ENCODE measurements at regions of chr3 and their contacts with region 1.

Region 1: GRCh38 chr3:111989061-111989678 is 9.6 kb upstream of the TAGLN3 start:
- DNase-seq: peak; percentile 56 to 71 (median 70)
- H3K4me3 ChIP-seq: no peak overlapping the region
- H3K27ac ChIP-seq: no peak overlapping the region
- H3K4me1 ChIP-seq: no peaks in the 10 kb centered on the region
- H3K27me3 ChIP-seq: no peaks in the 10 kb centered on the region

Region 2: DNA sequence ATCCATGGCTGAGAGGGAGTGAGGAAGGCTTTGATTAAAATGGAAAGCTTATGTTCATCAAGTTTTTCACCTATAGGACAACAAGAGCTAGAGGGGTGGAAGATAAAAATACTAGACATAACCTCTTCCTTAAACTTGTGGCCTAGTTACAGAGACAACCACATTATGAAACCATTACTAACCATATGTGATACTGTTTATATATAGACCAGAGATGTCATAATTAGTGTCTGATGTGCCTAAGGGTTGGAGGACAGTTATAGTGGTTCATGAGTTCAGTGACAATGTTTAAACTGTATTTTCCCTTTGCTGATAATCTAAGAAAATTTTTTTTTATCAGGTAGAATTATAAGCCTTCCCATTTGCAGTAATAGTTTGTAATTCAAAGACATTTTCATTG is 106.4 kb before region 1 on chr3:
- CTCF ChIA-PET with region 1: no interaction called
- POLR2A ChIA-PET with region 1: no interaction called
- DNase-seq: no peak
- H3K4me3 ChIP-seq: no peak overlapping the region
- H3K27ac ChIP-seq: no peak overlapping the region
- H3K4me1 ChIP-seq: no peaks in the 10 kb centered on the region
- H3K27me3 ChIP-seq: no peaks in the 10 kb centered on the region

Region 3: GRCh38 chr3:111978493-111979433 is 10.4 kb before region 1 on chr3 and contains the start of gene ABHD10:
- CTCF ChIA-PET with region 1: interaction called, 28 read pairs
- POLR2A ChIA-PET with region 1: no interaction called
- DNase-seq: peak; percentile 98 to 100 (median 98)
- H3K4me3 ChIP-seq: peak within 1 kb of the TSS; percentile 48 to 98 (median 93)
- H3K27ac ChIP-seq: peak within 1 kb of the TSS; percentile 52 to 85
- H3K4me1 ChIP-seq: peaks cover 5 to 35% (median 13%) of the 10 kb centered on the region in 4 experiments
- H3K27me3 ChIP-seq: no peaks in the 10 kb centered on the region

Region 4: DNA sequence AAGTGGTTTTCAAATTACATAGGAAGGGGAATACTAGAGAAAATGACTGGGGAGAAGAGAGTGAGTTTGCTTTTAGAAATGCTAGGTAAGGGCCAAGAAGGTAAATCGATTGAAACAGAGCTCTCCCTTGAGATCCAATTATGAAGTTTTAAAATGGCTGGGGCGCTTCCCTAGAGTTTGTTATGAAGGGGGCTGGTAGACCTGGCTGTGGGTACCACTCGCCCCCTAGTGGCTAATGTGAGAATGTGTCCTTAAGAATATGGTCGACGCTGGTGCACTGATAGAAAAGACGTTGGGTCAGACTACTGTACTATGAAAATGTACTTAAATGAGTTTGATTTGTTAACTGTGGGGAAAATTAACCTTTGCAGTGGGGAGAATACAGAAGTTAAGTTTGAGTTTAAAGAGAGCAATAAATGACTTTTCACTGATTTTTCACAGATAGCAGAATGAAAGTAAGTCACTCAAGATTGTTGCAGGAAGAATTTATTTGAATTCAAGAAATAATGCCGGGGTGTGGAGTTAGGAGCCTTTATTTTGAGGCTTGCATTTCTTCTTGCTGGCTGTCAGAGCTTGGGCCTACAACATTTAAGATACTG is 54.5 kb after region 1 on chr3:
- CTCF ChIA-PET with region 1: interaction called, 15 read pairs
- POLR2A ChIA-PET with region 1: no interaction called
- DNase-seq: peak; percentile 78 to 83 (median 82)
- H3K4me3 ChIP-seq: peak overlapping the region in 2 of 7 experiments; percentile 27 to 63
- H3K27ac ChIP-seq: no peak overlapping the region
- H3K4me1 ChIP-seq: no peaks in the 10 kb centered on the region
- H3K27me3 ChIP-seq: no peaks in the 10 kb centered on the region